Naive thymus-derived CD4-positive, alpha-beta T cell (primary cell): ENCODE measurements at regions of chr12 and their contacts with region 1.

Region 1: GRCh38 chr12:26832822-26833742 is at the start of gene ITPR2:
- DNase-seq: peak; percentile 81 to 94 (median 89)
- ATAC-seq: peak; percentile 96
- H3K4me3 ChIP-seq: peak within 1 kb of the TSS; percentile 96
- H3K4me3 Mint-ChIP-seq: peak within 1 kb of the TSS; percentile 92 to 100 (median 98)
- H3K27ac ChIP-seq: peak within 1 kb of the TSS; percentile 92
- H3K27ac Mint-ChIP-seq: peak within 1 kb of the TSS; percentile 95 to 99 (median 98)
- H3K4me1 ChIP-seq: peaks cover 12 to 16% of the 10 kb centered on the region in 2 donors
- H3K4me1 Mint-ChIP-seq: peaks cover 26 to 51% (median 45%) of the 10 kb centered on the region in 7 donors
- H3K27me3 ChIP-seq: no peaks in the 10 kb centered on the region
- H3K27me3 Mint-ChIP-seq: no peaks in the 10 kb centered on the region
- total RNA-seq, gene ITPR2: 44.9 to 71.5 (median 59.2) TPM

Region 2: GRCh38 chr12:26360062-26360461 is 473.0 kb before region 1 on chr12:
- CTCF ChIA-PET with region 1: no interaction called
- POLR2A ChIA-PET with region 1: no interaction called
- intact Hi-C with region 1: no loop called
- DNase-seq: no peak
- ATAC-seq: peak; percentile 32
- H3K4me3 ChIP-seq: no peak overlapping the region
- H3K4me3 Mint-ChIP-seq: no peak overlapping the region
- H3K27ac ChIP-seq: no peak overlapping the region
- H3K27ac Mint-ChIP-seq: no peak overlapping the region
- H3K4me1 ChIP-seq: no peaks in the 10 kb centered on the region
- H3K4me1 Mint-ChIP-seq: peaks cover 0 to 4% (median 0%) of the 10 kb centered on the region in 7 donors
- H3K27me3 ChIP-seq: no peaks in the 10 kb centered on the region
- H3K27me3 Mint-ChIP-seq: no peaks in the 10 kb centered on the region

Region 3: DNA sequence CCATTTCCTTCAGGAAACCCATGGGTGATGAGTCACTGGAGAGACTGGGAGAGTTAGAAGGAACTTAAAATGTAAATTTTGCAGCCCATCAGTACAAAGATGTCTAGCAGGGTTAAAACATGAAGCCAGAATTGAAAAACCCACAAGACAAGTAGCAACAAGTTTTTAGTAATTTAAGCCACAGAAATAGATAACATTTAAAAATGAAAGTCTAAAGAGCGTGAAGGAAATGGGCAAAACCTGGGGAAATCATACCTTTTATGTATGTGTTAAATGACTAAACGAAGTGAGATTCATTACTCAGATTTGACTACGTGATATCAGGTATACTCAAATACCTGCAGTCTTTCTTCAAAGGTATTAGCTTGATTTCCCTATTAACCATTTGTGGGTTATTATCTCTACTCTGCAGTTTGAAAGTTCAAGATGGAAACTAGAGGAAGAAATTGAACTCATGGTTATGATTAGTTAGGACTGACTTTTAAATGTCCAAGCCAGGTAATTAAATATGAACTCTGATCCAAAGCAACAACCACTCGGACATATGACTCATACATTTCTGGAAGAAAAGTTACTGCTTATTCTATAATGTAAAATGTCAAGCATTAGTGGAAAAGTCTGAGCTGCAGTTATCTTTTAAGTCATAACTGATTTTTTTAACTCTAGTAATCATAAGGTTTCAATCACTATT is 84.2 kb before region 1 on chr12:
- CTCF ChIA-PET with region 1: no interaction called
- POLR2A ChIA-PET with region 1: no interaction called
- intact Hi-C with region 1: loop called in 1 of 2 experiments (anchors 1 kb)
- DNase-seq: no peak
- ATAC-seq: no peak
- H3K4me3 ChIP-seq: no peak overlapping the region
- H3K4me3 Mint-ChIP-seq: peak overlapping the region in 5 of 10 donors; percentile 0 to 67 (median 26)
- H3K27ac ChIP-seq: no peak overlapping the region
- H3K27ac Mint-ChIP-seq: peak overlapping the region in 3 of 9 donors; percentile 48 to 65 (median 59)
- H3K4me1 ChIP-seq: peaks cover 11% of the 10 kb centered on the region in 2 donors
- H3K4me1 Mint-ChIP-seq: peaks cover 35 to 85% (median 67%) of the 10 kb centered on the region in 7 donors
- H3K27me3 ChIP-seq: no peaks in the 10 kb centered on the region
- H3K27me3 Mint-ChIP-seq: no peaks in the 10 kb centered on the region

Region 4: GRCh38 chr12:26853303-26854030 is 20.4 kb after region 1 on chr12:
- CTCF ChIA-PET with region 1: no interaction called
- POLR2A ChIA-PET with region 1: interaction called, 4 read pairs
- intact Hi-C with region 1: loop called (anchors 1 to 2 kb)
- DNase-seq: peak; percentile 47 to 73 (median 69)
- ATAC-seq: peak; percentile 95
- H3K4me3 ChIP-seq: no peak overlapping the region
- H3K4me3 Mint-ChIP-seq: no peak overlapping the region
- H3K27ac ChIP-seq: no peak overlapping the region
- H3K27ac Mint-ChIP-seq: peak overlapping the region in 2 of 9 donors; percentile 1 to 81
- H3K4me1 ChIP-seq: no peaks in the 10 kb centered on the region
- H3K4me1 Mint-ChIP-seq: peaks cover 0 to 4% (median 0%) of the 10 kb centered on the region in 7 donors
- H3K27me3 ChIP-seq: no peaks in the 10 kb centered on the region
- H3K27me3 Mint-ChIP-seq: peaks cover 0 to 23% (median 0%) of the 10 kb centered on the region in 5 donors

Region 5: DNA sequence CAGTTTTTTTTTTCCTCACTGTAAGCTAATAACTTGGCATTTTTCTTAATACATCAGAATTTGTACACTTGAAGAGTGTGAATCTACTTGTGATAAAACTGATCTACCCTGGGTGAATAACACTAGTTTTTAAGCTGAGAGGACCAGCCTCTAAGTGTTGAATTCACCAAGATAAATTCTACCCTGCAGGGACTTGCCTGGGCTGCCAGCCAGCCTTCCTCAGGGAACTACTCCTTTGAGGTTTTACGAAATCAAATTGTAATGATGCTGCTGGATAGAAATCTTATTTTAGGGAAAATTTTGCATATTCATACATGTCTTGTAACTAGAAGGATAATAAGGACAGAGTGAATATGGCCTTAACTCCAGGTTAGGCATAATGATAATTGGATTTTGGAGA is 191.2 kb after region 1 on chr12:
- CTCF ChIA-PET with region 1: no interaction called
- POLR2A ChIA-PET with region 1: interaction called, 27 read pairs
- intact Hi-C with region 1: loop called in 1 of 2 experiments (anchors 1 kb)
- DNase-seq: no peak
- ATAC-seq: no peak
- H3K4me3 ChIP-seq: no peak overlapping the region
- H3K4me3 Mint-ChIP-seq: peak overlapping the region; percentile 34 to 100 (median 96)
- H3K27ac ChIP-seq: no peak overlapping the region
- H3K27ac Mint-ChIP-seq: no peak overlapping the region
- H3K4me1 ChIP-seq: peaks cover 17 to 25% of the 10 kb centered on the region in 2 donors
- H3K4me1 Mint-ChIP-seq: peaks cover 28 to 47% (median 43%) of the 10 kb centered on the region in 7 donors
- H3K27me3 ChIP-seq: no peaks in the 10 kb centered on the region
- H3K27me3 Mint-ChIP-seq: peaks cover 0 to 4% (median 0%) of the 10 kb centered on the region in 5 donors

Region 6: GRCh38 chr12:27332407-27333301 is 499.6 kb after region 1 on chr12 and contains the start of gene BMAL2:
- CTCF ChIA-PET with region 1: no interaction called
- POLR2A ChIA-PET with region 1: no interaction called
- intact Hi-C with region 1: loop called in 1 of 2 experiments (anchors 2 kb)
- DNase-seq: peak in 8 of 9 donors; percentile 12 to 70 (median 16)
- ATAC-seq: peak; percentile 62
- H3K4me3 ChIP-seq: peak within 1 kb of the TSS; percentile 46
- H3K4me3 Mint-ChIP-seq: peak within 1 kb of the TSS; percentile 80 to 97 (median 88)
- H3K27ac ChIP-seq: no peak within 1 kb of the TSS
- H3K27ac Mint-ChIP-seq: peak within 1 kb of the TSS in 1 of 9 donors; percentile 94
- H3K4me1 ChIP-seq: peaks cover 4% of the 10 kb centered on the region in 2 donors
- H3K4me1 Mint-ChIP-seq: peaks cover 7 to 51% (median 15%) of the 10 kb centered on the region in 7 donors
- H3K27me3 ChIP-seq: peaks cover 0 to 8% of the 10 kb centered on the region in 2 donors
- H3K27me3 Mint-ChIP-seq: peaks cover 7 to 48% (median 46%) of the 10 kb centered on the region in 5 donors
- total RNA-seq, gene BMAL2: 0.19 to 37.7 (median 0.41) TPM in 4 of 5 experiments, not detected in the other